ENCODE measurements at regions of chr14 and their contacts with region 1.

Region 1: GRCh38 chr14:77023001-77023996 is 5.2 kb downstream of the IRF2BPL start:
- DNase-seq: no peak
- ATAC-seq: 0 out of 3 replicates have a peak, but pooled peaks have one; percentile 13
- H3K4me3 ChIP-seq: no peak overlapping the region
- H3K27ac ChIP-seq: peak overlapping the region; percentile 61; the same call in 1 of the 3 replicates
- H3K4me1 ChIP-seq: peaks cover 21 to 47% of the 10 kb centered on the region in 2 experiments
- H3K27me3 ChIP-seq: no peaks in the 10 kb centered on the region
- CTCF ChIP-seq: peak in 1 of 3 experiments; percentile 13; a peak in 1 of 6 replicates
- EP300 ChIP-seq: no peak
- POLR2A ChIP-seq: no peak
- RAD21 ChIP-seq: peak in 1 of 2 experiments; percentile 31; a peak in 2 of 4 replicates

Region 2: DNA sequence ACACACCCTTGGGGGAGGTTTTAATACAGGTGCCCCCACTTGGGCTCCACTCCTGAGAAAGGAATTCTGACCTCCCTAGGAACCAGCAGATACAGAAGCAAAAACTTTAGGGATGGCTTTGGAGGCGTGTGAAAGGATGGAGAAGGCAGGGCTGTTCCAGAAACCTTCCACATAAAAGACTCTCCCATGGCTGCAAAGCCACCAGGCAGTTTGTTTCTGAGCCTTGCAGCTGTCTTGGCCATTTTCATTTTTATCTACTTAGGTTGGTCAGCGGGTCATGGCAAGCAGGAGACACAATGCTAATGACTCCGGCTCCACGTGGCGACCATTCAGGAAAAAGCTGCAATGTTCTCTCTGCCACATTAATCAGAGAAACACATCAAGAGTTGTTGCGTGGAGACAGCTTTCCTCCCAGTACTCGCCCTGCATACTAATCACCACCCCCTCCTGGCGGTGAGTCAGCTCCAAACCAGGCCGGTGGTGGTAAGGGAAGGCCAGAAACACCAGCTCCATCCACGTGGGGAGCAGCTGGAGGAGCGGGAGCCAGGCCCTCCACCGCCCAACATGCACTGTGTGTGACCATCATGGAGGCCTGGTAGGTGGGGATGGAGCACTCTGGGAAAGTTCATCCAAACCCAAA is 36.1 kb after region 1 on chr14:
- CTCF ChIA-PET with region 1: no interaction called
- POLR2A ChIA-PET with region 1: interaction called, 4 read pairs
- in situ Hi-C with region 1: no loop called
- intact Hi-C with region 1: loop called (anchors 5 kb)
- DNase-seq: peak; percentile 75 to 80 (median 77)
- ATAC-seq: peak; percentile 99
- H3K4me3 ChIP-seq: no peak overlapping the region
- H3K27ac ChIP-seq: no peak overlapping the region
- H3K4me1 ChIP-seq: peaks cover 6 to 7% of the 10 kb centered on the region in 2 experiments; a peak in 3 of 5 replicates
- H3K27me3 ChIP-seq: peaks cover 0 to under 1% of the 10 kb centered on the region in 2 experiments; a peak in 1 of 5 replicates
- CTCF ChIP-seq: peak; percentile 56 to 67 (median 61); a peak in 5 of 6 replicates
- EP300 ChIP-seq: no peak
- POLR2A ChIP-seq: no peak
- RAD21 ChIP-seq: peak; percentile 60 to 63